ENCODE measurements at regions of chr4 and their contacts with region 1.

Region 1: DNA sequence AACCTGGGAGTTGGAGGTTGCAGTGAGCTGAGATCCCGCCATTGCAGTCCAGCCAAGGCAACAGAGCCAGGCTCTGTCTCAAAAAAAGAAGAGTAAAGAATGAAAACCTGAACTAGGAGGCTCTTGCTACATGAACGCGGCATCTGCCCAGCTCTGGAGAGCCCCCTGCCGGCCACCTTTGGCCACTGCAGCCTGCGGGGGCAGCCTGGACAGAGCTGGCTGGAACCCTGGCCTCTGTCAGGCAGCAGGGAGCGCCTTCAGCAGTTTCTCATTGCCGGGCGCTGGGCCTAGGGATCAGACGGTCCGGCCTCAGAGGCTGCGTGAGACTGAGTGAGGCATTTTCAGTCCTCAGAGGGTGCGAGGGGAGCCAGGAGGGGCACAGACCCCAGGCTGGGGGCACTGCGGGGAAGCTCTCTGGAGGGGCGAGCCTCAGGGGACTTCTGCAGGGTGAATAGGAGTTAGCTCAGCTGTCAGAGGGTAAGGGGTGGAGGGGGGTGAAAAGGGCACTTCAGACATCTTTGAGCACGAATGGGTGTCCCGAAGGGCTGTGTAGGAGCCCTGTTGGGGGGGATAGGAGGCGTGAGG is 17.5 kb downstream of the DOK7 start:
- DNase-seq: peak; percentile 83
- ATAC-seq: peak; percentile 78
- H3K4me3 Mint-ChIP-seq: no peak overlapping the region
- H3K27ac Mint-ChIP-seq: no peak overlapping the region
- H3K4me1 Mint-ChIP-seq: peaks cover 7% of the 10 kb centered on the region
- H3K27me3 Mint-ChIP-seq: peaks cover 11% of the 10 kb centered on the region

Region 2: DNA sequence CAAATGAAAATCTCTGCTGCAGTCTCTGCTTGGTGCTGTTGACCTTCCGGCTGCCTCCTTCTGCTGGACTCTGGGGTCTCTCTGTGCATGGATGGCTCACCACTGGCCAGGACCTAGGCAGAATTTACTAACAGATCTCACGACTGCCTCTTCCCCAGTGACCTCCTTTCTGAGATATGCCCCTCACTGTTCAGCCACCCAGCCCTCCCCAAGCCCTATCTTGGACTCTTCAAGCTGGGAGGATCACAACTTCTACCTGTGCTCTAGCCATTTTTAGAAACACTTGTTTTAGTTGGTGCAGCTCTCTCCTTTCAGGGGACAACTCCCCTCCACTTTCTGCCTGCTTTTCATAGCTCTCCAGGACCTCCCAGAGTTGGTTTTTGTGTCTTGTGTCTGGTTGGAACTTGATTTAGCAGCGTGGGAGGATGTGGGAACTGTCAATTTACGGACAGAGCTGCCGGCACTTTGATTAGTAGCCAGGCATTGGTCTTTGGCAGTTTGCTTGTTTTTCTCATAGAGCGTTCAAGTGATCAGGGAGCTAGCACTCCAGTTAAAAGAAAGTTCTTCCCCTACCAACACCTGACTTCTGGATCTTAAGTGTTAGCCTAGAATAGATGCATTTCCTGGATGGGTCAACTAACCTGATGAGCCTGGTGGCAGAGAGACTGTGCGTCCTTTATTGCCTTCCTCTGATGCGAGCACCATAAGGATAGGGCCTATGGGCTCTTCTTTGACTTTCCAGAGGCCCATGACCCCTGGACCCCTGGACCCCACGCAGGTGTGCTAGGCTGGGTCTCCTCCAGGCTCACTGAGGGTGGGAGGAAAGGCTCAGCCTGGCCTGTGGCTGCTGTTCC is 181.3 kb before region 1 on chr4:
- CTCF ChIA-PET with region 1: no interaction called
- POLR2A ChIA-PET with region 1: no interaction called
- DNase-seq: no peak
- ATAC-seq: no peak
- H3K4me3 Mint-ChIP-seq: no peak overlapping the region
- H3K27ac Mint-ChIP-seq: no peak overlapping the region
- H3K4me1 Mint-ChIP-seq: peaks cover 44% of the 10 kb centered on the region
- H3K27me3 Mint-ChIP-seq: peaks cover 65% of the 10 kb centered on the region

Region 3: GRCh38 chr4:3346146-3346545 is 134.5 kb before region 1 on chr4:
- CTCF ChIA-PET with region 1: interaction called, 15 read pairs
- POLR2A ChIA-PET with region 1: no interaction called
- DNase-seq: peak; percentile 66
- ATAC-seq: peak; percentile 89
- H3K4me3 Mint-ChIP-seq: no peak overlapping the region
- H3K27ac Mint-ChIP-seq: no peak overlapping the region
- H3K4me1 Mint-ChIP-seq: peaks cover 21% of the 10 kb centered on the region
- H3K27me3 Mint-ChIP-seq: peaks cover 5% of the 10 kb centered on the region

Region 4: DNA sequence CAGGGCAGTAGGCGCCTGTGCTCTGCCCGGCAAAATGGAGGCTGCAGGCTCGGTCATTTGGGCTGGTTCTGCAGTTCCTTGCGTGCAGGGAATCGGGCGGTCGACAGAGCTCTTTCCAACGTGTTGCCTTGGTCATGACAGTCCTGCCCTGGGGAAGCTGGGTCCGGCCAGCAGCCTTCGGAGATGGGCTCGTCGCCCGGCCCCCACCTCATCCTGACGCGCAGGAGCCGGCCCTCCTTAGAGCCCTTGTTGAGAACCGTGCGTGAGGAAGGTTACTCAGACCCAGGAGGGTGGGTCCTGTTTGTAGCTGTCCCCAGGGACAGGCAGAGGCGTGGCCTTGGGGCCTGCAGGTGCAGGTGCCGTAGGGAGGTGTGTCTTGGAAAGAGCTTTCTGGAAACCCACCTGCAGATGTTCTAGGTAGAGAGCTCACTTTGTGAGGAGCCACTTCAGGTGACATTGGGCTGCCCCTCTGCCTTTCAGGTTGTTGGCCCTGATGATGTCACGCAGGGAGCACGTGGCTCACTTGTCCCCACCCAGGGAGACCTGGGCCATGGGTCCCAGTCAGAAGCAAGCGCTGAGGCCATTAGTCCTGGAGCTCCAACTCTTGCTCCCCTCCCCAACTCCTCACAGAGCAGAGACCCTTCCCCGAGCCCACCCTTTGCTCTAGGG is 54.0 kb before region 1 on chr4:
- CTCF ChIA-PET with region 1: no interaction called
- POLR2A ChIA-PET with region 1: no interaction called
- DNase-seq: no peak
- ATAC-seq: no peak
- H3K4me3 Mint-ChIP-seq: no peak overlapping the region
- H3K27ac Mint-ChIP-seq: no peak overlapping the region
- H3K4me1 Mint-ChIP-seq: no peaks in the 10 kb centered on the region
- H3K27me3 Mint-ChIP-seq: no peaks in the 10 kb centered on the region

Region 5: GRCh38 chr4:3461478-3462291 is 18.9 kb before region 1 on chr4:
- CTCF ChIA-PET with region 1: no interaction called
- POLR2A ChIA-PET with region 1: no interaction called
- DNase-seq: no peak
- ATAC-seq: no peak
- H3K4me3 Mint-ChIP-seq: no peak overlapping the region
- H3K27ac Mint-ChIP-seq: no peak overlapping the region
- H3K4me1 Mint-ChIP-seq: no peaks in the 10 kb centered on the region
- H3K27me3 Mint-ChIP-seq: peaks cover 15% of the 10 kb centered on the region

Region 6: GRCh38 chr4:3613967-3614730 is 133.5 kb after region 1 on chr4:
- CTCF ChIA-PET with region 1: no interaction called
- POLR2A ChIA-PET with region 1: no interaction called
- DNase-seq: no peak
- ATAC-seq: no peak
- H3K4me3 Mint-ChIP-seq: no peak overlapping the region
- H3K27ac Mint-ChIP-seq: no peak overlapping the region
- H3K4me1 Mint-ChIP-seq: no peaks in the 10 kb centered on the region
- H3K27me3 Mint-ChIP-seq: peaks cover 3% of the 10 kb centered on the region